Gastrocnemius medialis (tissue), 4 donors: ENCODE measurements at regions of chr6 and their contacts with region 1.

Region 1: GRCh38 chr6:100116411-100117194 is 122.6 kb upstream of the MCHR2 start:
- DNase-seq: no peak
- ATAC-seq: no peak
- H3K4me3 ChIP-seq: no peak overlapping the region
- H3K27ac ChIP-seq: no peak overlapping the region
- H3K4me1 ChIP-seq: no peaks in the 10 kb centered on the region
- H3K27me3 ChIP-seq: no peaks in the 10 kb centered on the region
- CTCF ChIP-seq: peak; percentile 38 to 64 (median 45)
- POLR2A ChIP-seq: no peak

Region 2: GRCh38 chr6:100479179-100480035 is 362.8 kb after region 1 on chr6:
- in situ Hi-C with region 1: loop called (anchors 5 to 25 kb)
- intact Hi-C with region 1: loop called (anchors 1 kb)
- DNase-seq: no peak
- ATAC-seq: no peak
- H3K4me3 ChIP-seq: no peak overlapping the region
- H3K27ac ChIP-seq: no peak overlapping the region
- H3K4me1 ChIP-seq: no peaks in the 10 kb centered on the region
- H3K27me3 ChIP-seq: peaks cover 0 to 3% (median 0%) of the 10 kb centered on the region in 3 donors
- CTCF ChIP-seq: peak; percentile 30 to 65 (median 60)
- POLR2A ChIP-seq: no peak

Region 3: DNA sequence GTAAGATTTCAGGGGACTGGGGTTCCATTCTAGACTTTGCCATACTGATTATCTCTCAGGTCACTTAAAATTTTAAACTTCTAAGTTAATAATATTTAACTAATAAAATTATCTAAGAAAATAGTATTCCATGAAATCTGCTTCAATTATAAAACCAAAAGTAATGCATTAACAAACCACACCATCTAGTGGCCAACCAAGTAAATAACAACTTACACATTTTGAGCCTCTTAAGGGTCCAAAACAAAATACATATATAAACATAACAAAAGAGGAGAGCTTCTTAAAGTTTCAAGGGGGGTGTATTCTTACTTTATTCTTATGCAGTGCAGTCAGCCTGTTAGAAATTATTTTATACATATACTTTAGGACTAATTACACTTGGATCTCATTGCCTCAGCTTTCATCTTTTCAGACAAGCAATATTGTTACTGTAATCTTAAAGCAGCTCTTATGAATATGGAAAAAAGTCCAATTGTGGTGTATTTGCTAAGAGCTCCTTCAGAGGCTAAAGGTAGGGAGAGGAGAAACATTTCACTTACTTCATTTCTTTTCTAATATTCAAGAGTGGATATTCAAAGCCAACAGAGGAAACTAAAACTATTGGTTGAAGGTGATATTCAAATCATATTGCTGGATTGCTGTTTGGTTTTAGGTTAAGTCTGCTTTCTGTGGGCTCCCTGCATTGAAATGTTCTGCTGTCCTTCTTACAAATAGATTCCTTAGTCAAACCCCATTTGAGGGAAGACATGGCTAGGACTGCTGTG is 547.9 kb after region 1 on chr6:
- in situ Hi-C with region 1: loop called (anchors 5 to 10 kb)
- intact Hi-C with region 1: loop called (anchors 2 kb)
- DNase-seq: no peak
- ATAC-seq: no peak
- H3K4me3 ChIP-seq: no peak overlapping the region
- H3K27ac ChIP-seq: no peak overlapping the region
- H3K4me1 ChIP-seq: no peaks in the 10 kb centered on the region
- H3K27me3 ChIP-seq: no peaks in the 10 kb centered on the region
- CTCF ChIP-seq: peak in 4 of 5 experiments; percentile 35 to 66 (median 50)
- POLR2A ChIP-seq: no peak